ENCODE measurements at regions of chr2 and their contacts with region 1.

Region 1: DNA sequence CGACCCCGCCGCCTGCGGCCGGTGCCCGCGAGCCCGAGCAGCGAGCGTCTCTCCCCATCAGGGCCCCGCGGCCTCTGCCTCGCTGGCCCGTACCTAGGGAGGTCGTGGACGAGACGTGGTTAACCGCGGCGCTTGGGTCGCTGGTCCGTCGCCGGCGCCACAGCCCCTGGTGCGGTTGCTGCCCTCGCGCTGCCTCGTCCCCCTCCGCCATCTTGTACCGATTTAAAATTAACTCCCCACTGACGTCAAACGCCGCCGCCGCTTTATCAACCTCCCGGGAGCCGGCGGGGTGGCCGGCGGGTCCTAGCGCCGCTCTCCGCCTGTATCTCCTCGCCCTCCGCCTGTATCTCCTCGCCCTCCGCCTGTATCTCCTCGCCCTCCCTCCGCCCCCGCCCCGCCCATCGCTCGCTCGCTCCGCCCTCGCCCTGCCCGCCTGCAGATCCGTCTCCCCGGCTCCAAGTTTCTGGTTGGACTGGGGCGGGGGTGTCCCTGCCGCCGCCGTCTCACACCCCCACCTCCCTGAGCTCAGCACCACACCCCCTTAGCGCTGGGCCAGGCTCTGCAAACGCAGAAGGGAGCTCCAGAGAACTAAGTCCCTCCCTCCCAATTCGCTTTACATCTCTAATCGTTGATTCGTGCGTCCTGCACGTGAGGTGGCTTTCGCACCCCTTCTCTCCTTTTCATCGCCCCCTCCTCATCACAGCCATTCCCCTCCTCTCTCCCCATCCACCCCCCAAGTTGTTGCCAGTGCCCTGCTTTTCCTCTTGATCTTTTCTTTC is at the start of gene ATL2:
- DNase-seq: peak; percentile 97 to 99
- H3K4me3 ChIP-seq: peak within 1 kb of the TSS; percentile 79 to 95 (median 86)
- H3K27ac ChIP-seq: peak within 1 kb of the TSS; percentile 97 to 100 (median 99)
- H3K4me1 ChIP-seq: peaks cover 23 to 67% (median 46%) of the 10 kb centered on the region in 4 donors
- H3K27me3 ChIP-seq: no peaks in the 10 kb centered on the region
- CTCF ChIP-seq: peak in 1 of 7 experiments; percentile 11
- EP300 ChIP-seq: no peak
- POLR2A ChIP-seq: peak in 2 of 4 donors; percentile 84 to 94
- total RNA-seq, gene ATL2: 52.7 to 462 (median 102) TPM

Region 2: GRCh38 chr2:38323623-38324022 is 53.6 kb before region 1 on chr2:
- intact Hi-C with region 1: loop called (anchors 10 kb)
- DNase-seq: peak in 1 of 2 donors; percentile 20
- H3K4me3 ChIP-seq: no peak overlapping the region
- H3K27ac ChIP-seq: peak overlapping the region in 1 of 5 donors; percentile 20
- H3K4me1 ChIP-seq: peaks cover 0 to 58% (median 19%) of the 10 kb centered on the region in 4 donors
- H3K27me3 ChIP-seq: no peaks in the 10 kb centered on the region
- CTCF ChIP-seq: no peak
- EP300 ChIP-seq: no peak
- POLR2A ChIP-seq: no peak

Region 3: DNA sequence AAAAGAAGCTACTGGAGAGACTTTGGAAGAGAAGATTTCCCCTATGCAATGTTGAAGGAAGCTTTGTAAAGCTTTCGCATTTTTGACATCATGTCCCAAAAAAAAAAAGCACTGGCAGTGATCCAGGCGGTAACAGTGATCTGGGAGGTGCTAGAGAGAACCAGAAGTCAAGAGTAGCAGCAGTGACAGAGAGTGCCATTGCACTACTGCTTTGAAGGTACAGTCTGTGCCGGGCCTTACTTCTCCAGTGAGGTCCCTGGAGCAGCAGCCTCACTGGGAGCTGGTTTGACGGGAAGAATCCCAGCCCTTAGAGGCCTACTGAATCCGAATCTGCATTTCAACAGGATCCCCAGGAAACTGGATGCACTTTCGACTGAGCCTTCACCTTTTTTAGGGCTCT is 50.7 kb after region 1 on chr2:
- intact Hi-C with region 1: no loop called
- DNase-seq: no peak
- H3K4me3 ChIP-seq: no peak overlapping the region
- H3K27ac ChIP-seq: no peak overlapping the region
- H3K4me1 ChIP-seq: peaks cover 0 to 32% (median 8%) of the 10 kb centered on the region in 4 donors
- H3K27me3 ChIP-seq: no peaks in the 10 kb centered on the region
- CTCF ChIP-seq: no peak
- EP300 ChIP-seq: no peak
- POLR2A ChIP-seq: no peak

Measured in stomach (tissue), 19 donors.